ENCODE measurements at regions of chr7 and their contacts with region 1.

Region 1: DNA sequence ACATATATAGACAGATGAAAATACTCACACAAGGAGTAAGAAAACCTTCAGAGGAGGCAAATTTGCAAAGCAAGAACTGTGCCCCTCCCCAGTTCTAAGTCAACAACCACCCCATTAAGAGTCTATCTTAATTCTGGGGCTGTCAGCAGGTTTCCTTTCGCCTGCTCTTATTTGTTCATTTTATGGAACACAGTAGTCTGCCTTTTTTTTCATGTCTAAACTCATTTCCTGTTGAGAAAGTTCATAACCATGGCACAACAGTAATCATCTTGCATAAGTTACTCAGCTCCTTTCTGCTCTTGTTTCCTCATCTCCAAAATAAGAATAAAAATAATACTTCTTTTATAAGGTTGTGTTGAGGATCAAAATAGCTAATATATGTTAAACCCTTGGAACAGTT is 25.8 kb upstream of the AMPH start:
- DNase-seq: peak; percentile 64 to 89 (median 72)
- H3K4me3 ChIP-seq: peak overlapping the region in 1 of 3 experiments; percentile 45
- H3K4me3 Mint-ChIP-seq: peak overlapping the region in 1 of 2 donors; percentile 48
- H3K27ac ChIP-seq: peak overlapping the region; percentile 75 to 82
- H3K27ac Mint-ChIP-seq: peak overlapping the region; percentile 80 to 92 (median 88)
- H3K4me1 ChIP-seq: peaks cover 45 to 46% of the 10 kb centered on the region in 2 donors
- H3K4me1 Mint-ChIP-seq: peaks cover 47% of the 10 kb centered on the region
- H3K27me3 ChIP-seq: no peaks in the 10 kb centered on the region
- H3K27me3 Mint-ChIP-seq: peaks cover 0 to 4% (median 0%) of the 10 kb centered on the region in 3 donors
- CTCF ChIP-seq: no peak

Region 2: GRCh38 chr7:38398725-38399321 is 258.1 kb before region 1 on chr7:
- intact Hi-C with region 1: loop called (anchors 5 to 10 kb)
- DNase-seq: peak; percentile 38 to 64 (median 60)
- H3K4me3 ChIP-seq: no peak overlapping the region
- H3K4me3 Mint-ChIP-seq: no peak overlapping the region
- H3K27ac ChIP-seq: no peak overlapping the region
- H3K27ac Mint-ChIP-seq: no peak overlapping the region
- H3K4me1 ChIP-seq: peaks cover 22% of the 10 kb centered on the region in 2 donors
- H3K4me1 Mint-ChIP-seq: peaks cover 21% of the 10 kb centered on the region
- H3K27me3 ChIP-seq: no peaks in the 10 kb centered on the region
- H3K27me3 Mint-ChIP-seq: peaks cover 0 to 5% (median 5%) of the 10 kb centered on the region in 3 donors
- CTCF ChIP-seq: peak; percentile 97

Region 3: GRCh38 chr7:38409531-38409930 is 247.4 kb before region 1 on chr7:
- intact Hi-C with region 1: loop called (anchors 5 to 10 kb)
- DNase-seq: no peak
- H3K4me3 ChIP-seq: no peak overlapping the region
- H3K4me3 Mint-ChIP-seq: no peak overlapping the region
- H3K27ac ChIP-seq: no peak overlapping the region
- H3K27ac Mint-ChIP-seq: no peak overlapping the region
- H3K4me1 ChIP-seq: no peaks in the 10 kb centered on the region
- H3K4me1 Mint-ChIP-seq: peaks cover 11% of the 10 kb centered on the region
- H3K27me3 ChIP-seq: no peaks in the 10 kb centered on the region
- H3K27me3 Mint-ChIP-seq: peaks cover 0 to 2% (median 1%) of the 10 kb centered on the region in 3 donors
- CTCF ChIP-seq: no peak

Measured in CD14-positive monocyte (primary cell).